ENCODE measurements at regions of chr11 and their contacts with region 1.

Region 1: GRCh38 chr11:77820563-77821348 is at the starts of genes AAMDC and RSF1:
- DNase-seq: peak; percentile 97 to 100 (median 99)

Region 2: DNA sequence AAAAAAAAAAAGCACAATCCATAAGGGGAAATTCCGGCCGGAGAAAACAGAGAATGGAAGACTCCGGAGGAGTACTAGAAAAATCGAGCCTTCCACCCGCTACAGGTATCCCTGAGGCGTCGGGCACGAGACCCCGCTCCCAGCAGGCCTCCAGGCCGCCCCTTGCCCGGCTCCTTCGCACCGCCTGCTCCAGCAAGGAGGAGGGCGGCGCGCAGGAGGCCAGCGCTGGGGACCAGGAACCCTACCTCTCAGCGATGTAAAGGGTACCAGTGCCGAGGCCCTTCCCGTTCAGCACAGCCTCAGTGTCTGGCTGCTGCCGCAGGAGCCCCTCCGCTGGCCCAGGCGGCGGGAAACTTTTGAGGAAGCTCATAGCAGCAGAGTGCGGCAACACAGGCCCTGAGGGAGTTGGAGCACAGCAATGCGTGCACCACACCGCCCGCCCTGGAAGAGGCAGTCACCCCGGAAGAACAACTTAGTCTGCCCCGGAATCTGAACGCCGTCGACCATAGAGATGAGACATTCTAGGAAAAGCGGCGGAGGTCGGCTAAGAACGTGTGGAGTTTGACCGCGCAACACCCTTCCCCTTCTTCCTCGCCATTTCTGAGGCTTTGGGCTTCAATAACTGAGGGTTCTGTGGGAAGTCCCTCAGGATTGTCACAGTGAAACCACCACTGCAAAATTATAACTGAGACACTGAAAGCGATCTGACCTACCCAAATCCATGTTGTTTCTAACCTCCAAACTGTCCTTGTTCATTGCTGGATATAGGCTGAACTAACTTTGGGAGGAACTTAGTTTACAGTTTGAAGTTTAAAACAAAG is 183.2 kb before region 1 on chr11 and contains the start of gene CLNS1A:
- intact Hi-C with region 1: loop called (anchors 2 kb)
- DNase-seq: peak; percentile 89 to 99 (median 94)

Region 3: GRCh38 chr11:78045851-78046485 is 225.2 kb after region 1 on chr11:
- intact Hi-C with region 1: loop called (anchors 10 kb)
- DNase-seq: peak; percentile 67 to 98 (median 82)

Measured in posterior cingulate gyrus (tissue), 11 donors.